A549 (cell line): ENCODE measurements at regions of chr14 and their contacts with region 1.

Region 1: GRCh38 chr14:90697577-90698206 is 118.5 kb downstream of the TTC7B start:
- DNase-seq: peak; percentile 71 to 74
- ATAC-seq: peak; percentile 96 to 99
- H3K4me3 ChIP-seq: no peak overlapping the region
- H3K27ac ChIP-seq: no peak overlapping the region
- H3K4me1 ChIP-seq: no peaks in the 10 kb centered on the region
- CTCF ChIP-seq: peak; percentile 86
- EP300 ChIP-seq: no peak
- POLR2A ChIP-seq: no peak
- RAD21 ChIP-seq: peak; percentile 88 to 89

Region 2: GRCh38 chr14:90301668-90302090 is 396.0 kb before region 1 on chr14:
- CTCF ChIA-PET with region 1: interaction called, 23 read pairs
- POLR2A ChIA-PET with region 1: interaction called, 3 read pairs
- DNase-seq: peak; percentile 38 to 62
- ATAC-seq: peak; percentile 72 to 84; a peak in 4 of 6 replicates
- H3K4me3 ChIP-seq: no peak overlapping the region
- H3K27ac ChIP-seq: no peak overlapping the region
- H3K4me1 ChIP-seq: no peaks in the 10 kb centered on the region
- CTCF ChIP-seq: peak; percentile 66
- EP300 ChIP-seq: no peak
- POLR2A ChIP-seq: no peak
- RAD21 ChIP-seq: peak; percentile 71 to 79

Region 3: DNA sequence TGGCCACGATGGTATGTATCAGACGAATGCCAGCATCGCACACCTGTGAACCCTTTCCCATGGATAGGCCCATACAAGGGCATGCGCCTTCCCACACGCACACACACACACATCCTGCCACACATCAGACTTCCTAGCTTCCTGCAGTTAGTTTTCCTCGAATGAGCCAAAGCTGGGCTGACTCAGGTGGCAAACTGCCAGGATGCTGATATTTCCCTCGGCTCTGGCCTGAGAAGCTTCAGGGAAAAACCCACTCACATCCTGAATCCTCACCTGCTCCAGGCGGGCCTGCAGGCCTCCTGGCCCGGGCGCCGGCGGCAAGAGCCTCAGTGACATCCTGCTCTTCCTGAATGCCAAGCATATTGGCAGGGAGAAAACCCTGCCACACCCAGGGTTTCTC is 278.5 kb before region 1 on chr14:
- CTCF ChIA-PET with region 1: interaction called, 10 read pairs
- POLR2A ChIA-PET with region 1: no interaction called
- DNase-seq: peak; percentile 35 to 80
- ATAC-seq: peak; percentile 82 to 86
- H3K4me3 ChIP-seq: no peak overlapping the region
- H3K27ac ChIP-seq: peak overlapping the region in 1 of 2 experiments; percentile 57; a peak in 3 of 6 replicates
- H3K4me1 ChIP-seq: peaks cover 12% of the 10 kb centered on the region
- CTCF ChIP-seq: no peak
- EP300 ChIP-seq: no peak
- POLR2A ChIP-seq: no peak
- RAD21 ChIP-seq: no peak

Region 4: GRCh38 chr14:90681929-90682328 is 15.8 kb before region 1 on chr14:
- CTCF ChIA-PET with region 1: interaction called, 17 read pairs
- POLR2A ChIA-PET with region 1: no interaction called
- DNase-seq: no peak
- ATAC-seq: no peak
- H3K4me3 ChIP-seq: no peak overlapping the region
- H3K27ac ChIP-seq: no peak overlapping the region
- H3K4me1 ChIP-seq: peaks cover 16% of the 10 kb centered on the region; the same call in 2 of the 3 replicates
- CTCF ChIP-seq: no peak
- EP300 ChIP-seq: no peak
- POLR2A ChIP-seq: no peak
- RAD21 ChIP-seq: no peak

Region 5: GRCh38 chr14:90733139-90733808 is 35.6 kb after region 1 on chr14:
- CTCF ChIA-PET with region 1: interaction called, 12 read pairs
- POLR2A ChIA-PET with region 1: no interaction called
- DNase-seq: no peak
- ATAC-seq: no peak
- H3K4me3 ChIP-seq: no peak overlapping the region
- H3K27ac ChIP-seq: no peak overlapping the region
- H3K4me1 ChIP-seq: no peaks in the 10 kb centered on the region
- CTCF ChIP-seq: no peak
- EP300 ChIP-seq: no peak
- POLR2A ChIP-seq: no peak
- RAD21 ChIP-seq: no peak